B cell (primary cell): ENCODE measurements at regions of chr18 and their contacts with region 1.

Region 1: DNA sequence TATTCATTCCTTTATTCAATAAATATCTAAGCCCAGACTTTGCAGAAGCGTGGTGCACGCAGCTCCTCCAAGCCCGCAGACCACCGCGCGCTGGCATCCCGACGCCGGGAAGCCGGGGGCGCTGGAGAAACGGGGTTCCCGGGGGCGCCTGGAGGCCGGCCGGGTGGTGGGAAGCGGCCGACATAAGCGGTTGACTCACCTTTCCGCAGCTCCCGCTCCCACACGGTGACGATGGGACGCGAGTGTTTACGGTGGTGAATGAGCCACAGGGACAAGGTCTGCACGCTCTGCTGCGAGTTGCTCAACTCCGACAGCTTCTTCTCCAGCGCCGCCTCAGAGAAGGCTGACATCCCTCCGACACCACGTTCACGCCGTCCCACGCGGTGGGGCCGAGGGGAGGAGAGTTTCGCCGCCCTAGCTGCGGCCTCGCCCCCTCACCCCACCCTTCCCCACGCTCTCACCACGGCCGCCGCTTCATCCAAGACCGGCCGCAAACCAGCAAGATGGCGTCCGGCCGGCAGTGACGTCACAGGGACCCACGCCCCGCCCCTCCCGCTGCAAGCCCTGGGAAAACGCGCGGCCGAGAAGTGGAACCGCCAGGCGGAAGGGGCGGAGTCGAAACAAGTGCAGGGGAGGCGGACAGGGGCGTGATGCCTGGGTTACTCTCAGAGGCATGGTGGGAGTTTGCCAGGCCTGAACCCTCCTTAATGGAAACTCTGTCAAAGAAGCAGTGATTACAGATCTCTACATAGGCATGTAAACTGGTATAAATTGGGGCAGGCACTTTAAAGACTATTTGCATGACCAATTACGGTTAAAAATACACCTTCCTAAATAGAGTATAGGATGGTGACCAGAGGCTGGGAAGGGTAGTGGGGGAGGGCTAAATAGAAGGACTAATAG is at the start of gene RPRD1A:
- DNase-seq: peak; percentile 98
- ATAC-seq: peak; percentile 90
- H3K4me3 ChIP-seq: peak within 1 kb of the TSS; percentile 74 to 98 (median 97)
- H3K4me3 Mint-ChIP-seq: peak within 1 kb of the TSS; percentile 87
- H3K27ac ChIP-seq: peak within 1 kb of the TSS; percentile 83 to 85
- H3K27ac Mint-ChIP-seq: peak within 1 kb of the TSS; percentile 95
- H3K4me1 ChIP-seq: peaks cover 29 to 34% of the 10 kb centered on the region in 2 donors
- H3K4me1 Mint-ChIP-seq: peaks cover 42% of the 10 kb centered on the region
- H3K27me3 ChIP-seq: no peaks in the 10 kb centered on the region
- H3K27me3 Mint-ChIP-seq: no peaks in the 10 kb centered on the region
- CTCF ChIP-seq: no peak
- total RNA-seq, gene RPRD1A: 62.6 and 66.5 TPM in 2 replicates

Region 2: DNA sequence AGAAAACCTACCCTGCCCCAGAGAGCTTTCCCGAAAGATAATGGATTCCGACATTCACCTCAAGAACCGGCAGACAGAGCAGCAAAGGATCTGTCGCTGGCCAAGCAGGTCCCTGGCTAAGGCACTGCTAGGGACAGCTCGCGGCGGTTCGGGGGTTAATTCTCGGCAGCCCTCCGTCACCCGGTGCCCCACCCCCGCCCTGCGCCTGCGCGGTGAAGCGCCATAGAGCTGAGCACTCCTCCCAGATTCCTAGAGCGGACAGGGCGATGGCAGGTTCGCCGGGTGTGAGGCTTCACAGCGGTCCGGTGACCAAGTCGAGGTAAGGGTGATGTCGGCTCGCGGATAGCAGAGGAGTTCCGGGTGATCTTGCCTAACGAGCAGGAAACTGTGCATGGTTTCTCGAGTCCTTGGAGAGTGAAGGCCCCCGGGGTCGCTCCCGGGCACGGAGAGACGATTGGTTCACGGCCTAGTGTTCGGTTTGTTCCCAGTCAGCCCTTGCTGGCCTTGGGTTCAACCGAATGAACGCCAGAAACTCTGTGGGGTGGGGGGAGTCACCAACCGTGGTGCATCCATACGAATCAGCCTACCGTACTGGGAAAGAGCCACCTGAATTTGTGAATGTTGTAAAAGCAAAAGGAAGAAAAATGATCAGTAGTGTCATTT is 777.1 kb before region 1 on chr18 and contains the start of gene ZSCAN30:
- CTCF ChIA-PET with region 1: no interaction called
- POLR2A ChIA-PET with region 1: no interaction called
- intact Hi-C with region 1: loop called (anchors 2 kb)
- DNase-seq: peak; percentile 97
- ATAC-seq: peak; percentile 99
- H3K4me3 ChIP-seq: peak within 1 kb of the TSS; percentile 85 to 94 (median 90)
- H3K4me3 Mint-ChIP-seq: peak within 1 kb of the TSS; percentile 100
- H3K27ac ChIP-seq: peak within 1 kb of the TSS; percentile 80 to 86
- H3K27ac Mint-ChIP-seq: peak within 1 kb of the TSS; percentile 98
- H3K4me1 ChIP-seq: peaks cover 14 to 16% of the 10 kb centered on the region in 2 donors
- H3K4me1 Mint-ChIP-seq: peaks cover 45% of the 10 kb centered on the region
- H3K27me3 ChIP-seq: no peaks in the 10 kb centered on the region
- H3K27me3 Mint-ChIP-seq: no peaks in the 10 kb centered on the region
- CTCF ChIP-seq: no peak
- total RNA-seq, gene ZSCAN30: 32.0 and 37.3 TPM in 2 replicates

Region 3: DNA sequence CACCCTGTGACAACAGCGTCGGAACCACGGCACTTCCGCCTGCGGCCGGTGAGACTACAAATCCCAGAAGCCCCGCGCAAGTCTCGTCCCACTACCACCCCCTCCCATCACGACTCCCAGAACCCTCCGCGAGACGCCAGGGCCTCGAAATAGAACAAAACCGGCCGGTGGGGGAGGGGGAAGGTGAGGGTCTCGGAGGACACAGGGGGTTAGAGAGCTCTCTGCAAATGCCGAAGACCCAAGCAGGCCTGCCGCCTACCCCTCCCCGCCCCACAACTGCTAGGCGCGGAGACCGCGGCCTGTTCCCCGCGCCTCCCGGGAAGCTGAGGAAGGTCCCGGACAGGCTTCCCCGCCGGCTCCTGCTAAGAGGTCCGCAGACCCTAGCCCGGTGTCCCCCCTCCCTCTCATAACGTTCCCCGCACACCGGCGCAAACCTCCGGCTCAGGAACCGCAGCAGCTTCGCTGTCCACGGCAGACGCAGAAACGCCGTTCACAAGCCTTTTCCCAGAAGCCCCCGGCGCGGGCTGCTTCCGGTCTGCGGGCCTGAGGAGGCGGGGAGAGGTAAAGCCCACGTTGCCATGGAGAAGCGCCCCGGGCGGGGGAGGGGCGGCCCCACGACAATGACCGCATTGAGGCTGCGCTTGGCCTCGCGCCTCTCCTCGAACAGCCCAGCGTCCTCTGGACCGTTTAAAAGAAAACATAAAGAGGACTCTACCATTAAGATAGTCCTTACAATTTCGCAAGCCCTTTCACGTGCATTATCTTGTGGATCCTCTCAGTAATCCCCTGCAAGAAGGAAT is 723.2 kb before region 1 on chr18 and contains the start of gene ZNF24:
- CTCF ChIA-PET with region 1: no interaction called
- POLR2A ChIA-PET with region 1: no interaction called
- intact Hi-C with region 1: loop called (anchors 2 kb)
- DNase-seq: peak; percentile 96
- ATAC-seq: peak; percentile 84
- H3K4me3 ChIP-seq: peak within 1 kb of the TSS; percentile 84 to 99 (median 97)
- H3K4me3 Mint-ChIP-seq: peak within 1 kb of the TSS; percentile 100
- H3K27ac ChIP-seq: peak within 1 kb of the TSS; percentile 99
- H3K27ac Mint-ChIP-seq: peak within 1 kb of the TSS; percentile 99
- H3K4me1 ChIP-seq: peaks cover 24 to 35% of the 10 kb centered on the region in 2 donors
- H3K4me1 Mint-ChIP-seq: peaks cover 64% of the 10 kb centered on the region
- H3K27me3 ChIP-seq: no peaks in the 10 kb centered on the region
- H3K27me3 Mint-ChIP-seq: no peaks in the 10 kb centered on the region
- CTCF ChIP-seq: no peak
- total RNA-seq, gene ZNF24: 80.1 and 83.7 TPM in 2 replicates

Region 4: GRCh38 chr18:35580701-35581539 is 486.4 kb before region 1 on chr18:
- CTCF ChIA-PET with region 1: no interaction called
- POLR2A ChIA-PET with region 1: no interaction called
- intact Hi-C with region 1: loop called (anchors 10 kb)
- DNase-seq: peak; percentile 88
- ATAC-seq: peak; percentile 65
- H3K4me3 ChIP-seq: peak overlapping the region; percentile 30 to 78 (median 65)
- H3K4me3 Mint-ChIP-seq: peak overlapping the region; percentile 84
- H3K27ac ChIP-seq: peak overlapping the region; percentile 69 to 86
- H3K27ac Mint-ChIP-seq: peak overlapping the region; percentile 88
- H3K4me1 ChIP-seq: peaks cover 15 to 16% of the 10 kb centered on the region in 2 donors
- H3K4me1 Mint-ChIP-seq: peaks cover 33% of the 10 kb centered on the region
- H3K27me3 ChIP-seq: no peaks in the 10 kb centered on the region
- H3K27me3 Mint-ChIP-seq: no peaks in the 10 kb centered on the region
- CTCF ChIP-seq: no peak

Region 5: DNA sequence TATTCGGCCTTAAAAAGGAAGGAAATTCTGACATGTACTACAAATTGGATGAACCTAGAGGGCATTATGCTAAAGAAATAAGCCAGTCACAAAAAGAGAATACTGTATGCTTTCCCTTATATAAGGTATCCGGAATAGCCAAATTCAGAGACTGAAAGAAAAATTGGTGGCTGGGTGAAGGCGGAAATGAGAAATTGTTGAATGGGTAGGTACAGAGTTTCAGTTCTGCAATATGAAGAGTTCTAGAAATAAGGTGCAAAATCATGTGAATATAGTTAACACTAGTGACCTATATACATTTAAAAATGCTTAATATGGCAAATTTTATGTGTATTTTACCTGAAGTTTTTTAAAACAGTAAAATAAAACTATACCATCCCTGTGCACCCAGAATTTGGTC is 51.7 kb before region 1 on chr18:
- CTCF ChIA-PET with region 1: interaction called, 8 read pairs
- POLR2A ChIA-PET with region 1: no interaction called
- intact Hi-C with region 1: loop called (anchors 5 kb)
- DNase-seq: peak; percentile 71
- ATAC-seq: peak; percentile 76
- H3K4me3 ChIP-seq: no peak overlapping the region
- H3K4me3 Mint-ChIP-seq: peak overlapping the region; percentile 3
- H3K27ac ChIP-seq: no peak overlapping the region
- H3K27ac Mint-ChIP-seq: peak overlapping the region; percentile 12
- H3K4me1 ChIP-seq: peaks cover 13 to 19% of the 10 kb centered on the region in 2 donors
- H3K4me1 Mint-ChIP-seq: peaks cover 24% of the 10 kb centered on the region
- H3K27me3 ChIP-seq: no peaks in the 10 kb centered on the region
- H3K27me3 Mint-ChIP-seq: no peaks in the 10 kb centered on the region
- CTCF ChIP-seq: no peak

Region 6: DNA sequence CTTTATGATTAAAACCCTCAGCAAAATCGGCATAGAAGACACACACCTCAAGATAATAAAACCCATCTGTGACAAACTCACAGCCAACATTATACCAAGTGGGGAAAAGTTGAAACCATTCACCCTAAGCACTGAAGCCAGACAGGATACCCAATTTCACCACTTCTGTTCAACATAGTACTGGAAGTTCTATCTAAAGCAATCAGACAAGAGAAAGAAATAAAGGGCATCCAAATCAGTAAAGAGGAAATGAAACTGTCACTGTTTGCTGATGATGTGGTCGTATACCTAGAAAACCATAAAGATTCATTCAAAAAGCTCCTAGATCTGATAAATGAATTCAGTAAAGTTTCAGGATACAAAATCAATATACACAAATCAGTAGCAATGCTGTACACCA is 16.4 kb after region 1 on chr18:
- CTCF ChIA-PET with region 1: no interaction called
- POLR2A ChIA-PET with region 1: no interaction called
- intact Hi-C with region 1: loop called (anchors 2 kb)
- DNase-seq: peak; percentile 64
- ATAC-seq: peak; percentile 47
- H3K4me3 ChIP-seq: no peak overlapping the region
- H3K4me3 Mint-ChIP-seq: peak overlapping the region; percentile 29
- H3K27ac ChIP-seq: no peak overlapping the region
- H3K27ac Mint-ChIP-seq: peak overlapping the region; percentile 64
- H3K4me1 ChIP-seq: peaks cover 8 to 14% of the 10 kb centered on the region in 2 donors
- H3K4me1 Mint-ChIP-seq: peaks cover 25% of the 10 kb centered on the region
- H3K27me3 ChIP-seq: no peaks in the 10 kb centered on the region
- H3K27me3 Mint-ChIP-seq: no peaks in the 10 kb centered on the region
- CTCF ChIP-seq: no peak

Region 7: GRCh38 chr18:36107477-36107876 is 40.2 kb after region 1 on chr18:
- CTCF ChIA-PET with region 1: no interaction called
- POLR2A ChIA-PET with region 1: no interaction called
- intact Hi-C with region 1: no loop called
- DNase-seq: no peak
- ATAC-seq: no peak
- H3K4me3 ChIP-seq: no peak overlapping the region
- H3K4me3 Mint-ChIP-seq: no peak overlapping the region
- H3K27ac ChIP-seq: no peak overlapping the region
- H3K27ac Mint-ChIP-seq: no peak overlapping the region
- H3K4me1 ChIP-seq: no peaks in the 10 kb centered on the region
- H3K4me1 Mint-ChIP-seq: no peaks in the 10 kb centered on the region
- H3K27me3 ChIP-seq: no peaks in the 10 kb centered on the region
- H3K27me3 Mint-ChIP-seq: peaks cover 4% of the 10 kb centered on the region
- CTCF ChIP-seq: no peak

Region 8: GRCh38 chr18:36493349-36494159 is 426.2 kb after region 1 on chr18:
- CTCF ChIA-PET with region 1: no interaction called
- POLR2A ChIA-PET with region 1: no interaction called
- intact Hi-C with region 1: no loop called
- DNase-seq: no peak
- ATAC-seq: no peak
- H3K4me3 ChIP-seq: no peak overlapping the region
- H3K4me3 Mint-ChIP-seq: no peak overlapping the region
- H3K27ac ChIP-seq: no peak overlapping the region
- H3K27ac Mint-ChIP-seq: no peak overlapping the region
- H3K4me1 ChIP-seq: no peaks in the 10 kb centered on the region
- H3K4me1 Mint-ChIP-seq: no peaks in the 10 kb centered on the region
- H3K27me3 ChIP-seq: peaks cover 0 to 7% (median 0%) of the 10 kb centered on the region in 4 experiments
- H3K27me3 Mint-ChIP-seq: peaks cover 18% of the 10 kb centered on the region
- CTCF ChIP-seq: no peak